K562 (cell line): ENCODE measurements at regions of chr11 and their contacts with region 1.

Region 1: GRCh38 chr11:66815646-66816045 is 27.6 kb upstream of the RCE1 start:
- DNase-seq: no peak
- ATAC-seq: no peak
- H3K4me3 ChIP-seq: no peak overlapping the region
- H3K27ac ChIP-seq: no peak overlapping the region
- H3K4me1 ChIP-seq: no peaks in the 10 kb centered on the region
- H3K27me3 ChIP-seq: no peaks in the 10 kb centered on the region
- CTCF ChIP-seq: no peak
- EP300 ChIP-seq: no peak
- POLR2A ChIP-seq: no peak
- RAD21 ChIP-seq: no peak

Region 2: DNA sequence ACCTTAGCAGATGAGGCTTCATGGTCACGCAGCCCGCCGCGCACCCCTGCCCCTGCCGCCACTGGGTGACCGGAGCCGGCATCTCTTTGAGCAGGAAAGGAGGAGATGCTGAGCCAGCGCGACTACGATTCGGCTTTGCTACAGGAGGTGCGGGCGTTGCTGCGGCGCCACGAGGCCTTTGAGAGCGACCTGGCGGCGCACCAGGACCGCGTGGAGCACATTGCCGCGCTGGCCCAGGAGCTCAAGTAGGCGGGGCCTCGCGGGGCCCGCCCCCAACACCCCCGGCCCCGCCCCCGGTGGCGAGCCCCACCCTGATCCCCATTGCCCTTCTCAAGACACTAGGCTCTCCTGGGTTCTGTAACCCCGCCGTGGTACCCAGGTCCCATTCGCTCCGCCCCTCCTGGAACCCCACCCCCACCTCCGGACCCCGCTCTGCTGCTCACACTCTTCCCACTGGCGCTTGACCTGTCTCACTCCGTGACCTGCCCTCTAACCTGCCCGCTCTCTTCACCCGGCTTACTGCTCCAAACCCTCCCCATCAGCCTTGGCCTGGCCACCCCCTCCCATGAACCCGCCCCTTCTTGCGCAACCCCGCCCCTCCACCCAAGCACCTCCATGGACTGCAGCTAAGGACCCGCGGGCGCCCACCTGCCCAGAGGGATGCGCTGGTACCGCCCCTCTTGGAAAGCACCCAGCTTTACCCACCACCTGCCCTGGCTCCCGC is 256.3 kb before region 1 on chr11:
- CTCF ChIA-PET with region 1: no interaction called
- POLR2A ChIA-PET with region 1: no interaction called
- in situ Hi-C with region 1: loop called (anchors 10 kb)
- intact Hi-C with region 1: no loop called
- DNase-seq: peak; percentile 70 to 96 (median 93)
- ATAC-seq: peak; percentile 88
- H3K4me3 ChIP-seq: no peak overlapping the region
- H3K27ac ChIP-seq: no peak overlapping the region
- H3K4me1 ChIP-seq: peaks cover 8 to 38% of the 10 kb centered on the region in 2 experiments; a peak in 4 of 5 replicates
- H3K27me3 ChIP-seq: no peaks in the 10 kb centered on the region
- CTCF ChIP-seq: no peak
- EP300 ChIP-seq: no peak
- POLR2A ChIP-seq: no peak
- RAD21 ChIP-seq: no peak